Breast epithelium (tissue), 4 donors: ENCODE measurements at regions of chr11 and their contacts with region 1.

Region 1: DNA sequence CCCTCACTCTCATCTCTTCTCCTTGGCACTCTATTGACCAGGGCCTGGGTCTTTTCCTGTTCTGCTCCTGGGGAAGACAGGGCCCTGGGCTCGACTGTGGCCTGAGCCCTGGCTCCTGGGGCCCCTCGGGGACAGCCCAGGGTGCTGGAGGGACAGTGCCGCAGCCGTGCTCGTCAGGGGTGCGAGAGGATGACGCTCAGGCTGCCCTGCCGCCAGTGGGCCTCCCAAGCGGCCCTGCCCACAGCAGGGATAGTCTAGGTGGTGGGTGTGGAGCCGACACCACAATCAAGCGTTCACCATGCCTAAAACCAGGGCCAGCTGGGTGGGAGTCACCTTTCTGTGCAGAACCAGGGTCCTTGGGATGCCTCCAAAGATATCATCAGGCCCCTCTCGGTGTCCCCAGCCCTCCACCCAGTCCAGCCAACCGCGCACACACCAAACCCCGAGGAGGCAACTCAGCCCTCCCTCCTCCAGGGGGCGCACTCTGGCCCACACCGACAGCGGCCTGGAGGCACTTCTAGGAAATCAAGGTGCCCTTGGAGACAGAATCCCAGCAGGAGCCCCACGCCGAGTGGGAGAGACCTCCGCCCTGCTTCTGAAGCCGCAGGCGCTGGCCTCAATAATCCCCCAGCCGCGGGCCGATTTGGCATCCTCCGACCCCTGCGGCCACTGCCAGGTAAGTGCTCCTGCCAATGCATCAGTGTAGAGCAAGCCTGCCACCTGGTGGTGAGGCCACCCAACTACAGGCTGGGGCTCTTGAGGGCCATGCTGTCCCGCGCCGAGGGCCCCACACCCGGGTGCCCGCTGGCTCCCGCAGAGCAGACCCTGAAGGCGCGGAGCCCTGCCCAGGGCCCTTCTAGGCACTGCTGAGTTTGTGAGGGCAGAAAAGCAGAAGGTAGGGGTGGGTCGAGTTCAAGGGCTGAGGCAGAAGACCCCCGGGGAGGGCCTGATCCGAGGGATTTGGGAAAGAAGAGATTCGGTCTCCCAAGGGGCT is 496.4 kb downstream of the BUD13 start:
- DNase-seq: peak; percentile 48 to 72
- H3K4me3 ChIP-seq: peak overlapping the region in 2 of 3 donors; percentile 8 to 54
- H3K27ac ChIP-seq: no peak overlapping the region
- H3K4me1 ChIP-seq: no peaks in the 10 kb centered on the region
- H3K27me3 ChIP-seq: peaks cover 0 to 5% of the 10 kb centered on the region in 2 donors
- CTCF ChIP-seq: peak; percentile 75 to 96 (median 91)
- POLR2A ChIP-seq: no peak

Region 2: DNA sequence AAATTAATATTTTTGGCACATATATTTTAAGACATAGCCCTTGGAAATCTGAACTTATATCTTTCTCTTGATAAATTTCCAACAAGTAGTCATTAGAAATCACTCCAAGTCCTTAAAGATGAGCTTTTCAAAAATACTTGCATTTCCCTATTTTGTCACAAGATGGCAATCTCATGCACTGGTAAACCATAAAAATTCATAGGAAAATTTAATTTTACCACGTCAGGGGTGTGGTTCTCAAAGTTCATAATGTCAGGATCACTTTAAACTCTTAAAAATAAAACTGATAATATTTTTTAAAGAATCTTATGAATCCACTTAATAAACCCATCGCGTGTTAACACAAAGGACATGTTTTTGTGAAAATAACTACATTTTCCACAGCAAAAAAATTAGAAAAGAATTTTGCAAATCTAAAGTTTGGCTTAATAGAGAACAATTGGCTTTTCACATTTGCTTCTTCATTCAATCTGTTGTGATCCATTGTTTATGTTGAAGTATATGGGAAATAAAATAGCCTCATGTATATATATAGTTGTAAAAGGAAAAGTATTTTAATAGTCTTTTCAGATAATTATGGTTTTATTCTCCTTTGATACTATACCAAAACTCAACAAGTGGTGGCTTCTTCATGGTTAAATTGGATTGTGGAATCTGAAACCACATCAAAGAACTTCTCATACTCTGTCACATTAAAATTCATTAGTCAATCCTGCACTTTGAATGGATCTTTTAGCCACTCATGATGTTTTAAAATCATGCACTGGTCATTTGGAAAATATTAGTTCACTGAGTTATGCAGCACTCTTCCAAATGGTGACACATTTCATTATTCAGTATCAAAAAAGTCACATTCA is 941.2 kb before region 1 on chr11:
- intact Hi-C with region 1: loop called (anchors 10 kb)
- DNase-seq: no peak
- H3K4me3 ChIP-seq: no peak overlapping the region
- H3K27ac ChIP-seq: no peak overlapping the region
- H3K4me1 ChIP-seq: no peaks in the 10 kb centered on the region
- H3K27me3 ChIP-seq: no peaks in the 10 kb centered on the region
- CTCF ChIP-seq: peak; percentile 25 to 71 (median 64)
- POLR2A ChIP-seq: no peak

Region 3: GRCh38 chr11:117843666-117844484 is 1567.5 kb after region 1 on chr11:
- intact Hi-C with region 1: no loop called
- DNase-seq: peak; percentile 67 to 84
- H3K4me3 ChIP-seq: no peak overlapping the region
- H3K27ac ChIP-seq: no peak overlapping the region
- H3K4me1 ChIP-seq: no peaks in the 10 kb centered on the region
- H3K27me3 ChIP-seq: no peaks in the 10 kb centered on the region
- CTCF ChIP-seq: peak; percentile 97 to 98 (median 98)
- POLR2A ChIP-seq: no peak